PC-9 (cell line): ENCODE measurements at regions of chr5 and their contacts with region 1.

Region 1: DNA sequence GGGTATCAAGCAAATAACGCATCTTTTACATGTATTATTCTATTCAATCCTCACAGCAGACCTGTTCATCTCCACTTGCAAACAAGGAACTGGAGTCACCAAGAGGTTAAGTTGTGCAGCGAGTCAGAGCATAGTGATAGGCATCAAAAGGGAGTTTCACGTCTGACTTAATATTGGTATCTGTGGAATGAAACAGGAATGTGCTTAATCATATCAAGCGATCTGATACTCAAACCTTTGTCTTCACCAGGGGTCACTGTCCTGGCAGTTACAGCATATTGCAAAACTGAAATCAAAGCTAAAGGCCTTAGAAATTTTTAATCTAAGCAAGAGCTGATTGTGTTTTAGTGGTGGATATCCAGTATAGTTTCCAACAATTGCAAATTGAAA is 271.6 kb downstream of the PLK2 start:
- DNase-seq: peak; percentile 60 to 99
- H3K4me3 ChIP-seq: peak overlapping the region; percentile 1; the same call in 1 of the 2 replicates
- H3K27ac ChIP-seq: peak overlapping the region; percentile 94
- H3K4me1 ChIP-seq: peaks cover 80% of the 10 kb centered on the region
- H3K27me3 ChIP-seq: no peaks in the 10 kb centered on the region
- CTCF ChIP-seq: no peak

Region 2: DNA sequence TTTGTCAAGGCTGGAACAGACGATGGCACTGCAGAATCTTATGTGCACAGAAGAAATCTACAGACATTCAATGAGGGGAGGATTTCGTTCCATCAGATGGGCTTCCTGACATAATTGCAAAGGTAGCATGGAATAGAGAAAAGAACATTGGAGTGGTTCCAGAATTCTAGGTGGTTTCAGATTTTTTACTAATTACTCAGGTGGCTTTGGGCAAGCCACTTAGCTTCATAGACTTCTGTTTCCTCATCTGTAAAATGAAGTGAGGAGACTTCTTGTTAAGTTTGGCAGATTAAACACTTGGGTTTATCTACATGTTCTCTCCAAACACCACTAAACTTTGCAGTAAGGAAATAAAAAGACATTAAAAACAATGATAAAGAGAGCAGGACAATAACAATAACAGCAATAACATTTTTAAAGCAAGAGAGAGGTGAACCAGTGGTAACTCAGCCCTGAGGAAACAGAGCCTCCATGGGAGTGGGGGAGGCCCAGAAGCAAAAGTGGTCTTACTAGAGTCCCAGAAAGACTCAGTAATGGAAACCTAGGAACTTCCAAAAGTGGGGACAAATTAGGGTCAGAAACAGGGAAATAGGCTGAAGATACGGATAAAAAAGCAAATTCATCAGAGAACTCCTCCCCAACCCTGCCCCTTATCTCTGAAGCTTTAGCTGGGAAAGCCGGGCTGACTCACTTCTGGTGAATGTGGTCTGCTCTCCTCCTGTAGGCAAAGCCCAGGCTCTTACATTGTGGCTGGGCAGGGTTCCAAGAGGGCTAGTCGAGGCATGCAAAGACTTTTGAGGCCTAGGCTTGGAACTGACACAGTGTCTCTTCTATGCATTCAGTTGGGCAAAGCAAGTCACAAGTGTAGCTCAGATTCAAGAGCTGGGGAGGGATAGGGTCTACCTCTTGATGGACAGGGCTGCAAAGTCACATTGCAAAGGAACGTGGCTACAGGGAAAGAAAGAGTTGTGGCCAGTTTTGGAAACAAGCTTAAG is 693.9 kb before region 1 on chr5:
- CTCF ChIA-PET with region 1: no interaction called
- POLR2A ChIA-PET with region 1: no interaction called
- intact Hi-C with region 1: loop called (anchors 1 kb)
- DNase-seq: peak; percentile 90 to 93
- H3K4me3 ChIP-seq: peak overlapping the region; percentile 28; the same call in 1 of the 2 replicates
- H3K27ac ChIP-seq: peak overlapping the region; percentile 95
- H3K4me1 ChIP-seq: peaks cover 44% of the 10 kb centered on the region
- H3K27me3 ChIP-seq: no peaks in the 10 kb centered on the region
- CTCF ChIP-seq: no peak

Region 3: GRCh38 chr5:57692582-57693487 is 495.4 kb before region 1 on chr5:
- CTCF ChIA-PET with region 1: no interaction called
- POLR2A ChIA-PET with region 1: no interaction called
- intact Hi-C with region 1: loop called (anchors 2 kb)
- DNase-seq: peak; percentile 83 to 86
- H3K4me3 ChIP-seq: no peak overlapping the region; the same call in 1 of the 2 replicates
- H3K27ac ChIP-seq: peak overlapping the region; percentile 91
- H3K4me1 ChIP-seq: peaks cover 25% of the 10 kb centered on the region
- H3K27me3 ChIP-seq: no peaks in the 10 kb centered on the region
- CTCF ChIP-seq: no peak

Region 4: GRCh38 chr5:57841676-57842363 is 346.4 kb before region 1 on chr5:
- CTCF ChIA-PET with region 1: no interaction called
- POLR2A ChIA-PET with region 1: interaction called, 9 read pairs
- intact Hi-C with region 1: loop called (anchors 1 kb)
- DNase-seq: peak; percentile 79 to 98
- H3K4me3 ChIP-seq: peak overlapping the region; percentile 24; the same call in 1 of the 2 replicates
- H3K27ac ChIP-seq: peak overlapping the region; percentile 98
- H3K4me1 ChIP-seq: peaks cover 66% of the 10 kb centered on the region
- H3K27me3 ChIP-seq: no peaks in the 10 kb centered on the region
- CTCF ChIP-seq: 0 out of 2 replicates have a peak, but pooled peaks have one; percentile 16

Region 5: GRCh38 chr5:58259685-58260152 is 71.5 kb after region 1 on chr5:
- CTCF ChIA-PET with region 1: interaction called, 7 read pairs
- POLR2A ChIA-PET with region 1: interaction called, 43 read pairs
- intact Hi-C with region 1: loop called (anchors 1 kb)
- DNase-seq: peak; percentile 85 to 100
- H3K4me3 ChIP-seq: peak overlapping the region; percentile 44; the same call in 1 of the 2 replicates
- H3K27ac ChIP-seq: peak overlapping the region; percentile 98
- H3K4me1 ChIP-seq: peaks cover 42% of the 10 kb centered on the region
- H3K27me3 ChIP-seq: no peaks in the 10 kb centered on the region
- CTCF ChIP-seq: no peak

Region 6: DNA sequence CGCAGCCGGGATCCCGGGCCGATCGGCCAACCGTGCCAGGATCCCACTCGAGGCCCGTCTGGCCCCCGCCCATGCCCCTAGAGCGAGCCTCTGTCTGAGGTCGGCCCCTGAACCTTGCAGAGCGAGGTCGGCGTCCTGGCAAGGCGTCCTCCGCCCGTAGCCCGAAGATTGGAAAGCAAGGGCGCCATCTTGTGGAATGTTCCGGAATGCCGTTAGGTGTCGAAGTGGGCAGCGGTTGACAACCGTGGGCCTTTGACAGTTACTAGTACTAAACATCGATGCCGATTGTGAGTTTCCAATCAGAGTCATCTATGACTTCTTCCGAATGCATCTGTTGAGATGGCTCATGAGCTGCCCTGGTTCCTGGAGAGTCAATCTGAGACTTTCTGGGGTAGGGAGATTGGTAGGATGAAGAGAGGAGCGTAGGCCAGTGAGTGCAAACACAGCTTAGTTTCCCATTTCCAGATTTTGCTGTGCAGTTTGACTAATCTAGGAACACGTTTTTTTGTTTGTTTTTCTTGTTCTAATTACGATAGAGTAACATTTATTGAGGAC is 272.6 kb after region 1 on chr5:
- CTCF ChIA-PET with region 1: interaction called, 3 read pairs
- POLR2A ChIA-PET with region 1: interaction called, 10 read pairs
- intact Hi-C with region 1: no loop called
- DNase-seq: peak; percentile 79 to 91
- H3K4me3 ChIP-seq: peak overlapping the region; percentile 90
- H3K27ac ChIP-seq: peak overlapping the region; percentile 96
- H3K4me1 ChIP-seq: peaks cover 14% of the 10 kb centered on the region
- H3K27me3 ChIP-seq: no peaks in the 10 kb centered on the region
- CTCF ChIP-seq: peak; percentile 83